HEK293 (cell line): ENCODE measurements at regions of chr13 and their contacts with region 1.

Region 1: DNA sequence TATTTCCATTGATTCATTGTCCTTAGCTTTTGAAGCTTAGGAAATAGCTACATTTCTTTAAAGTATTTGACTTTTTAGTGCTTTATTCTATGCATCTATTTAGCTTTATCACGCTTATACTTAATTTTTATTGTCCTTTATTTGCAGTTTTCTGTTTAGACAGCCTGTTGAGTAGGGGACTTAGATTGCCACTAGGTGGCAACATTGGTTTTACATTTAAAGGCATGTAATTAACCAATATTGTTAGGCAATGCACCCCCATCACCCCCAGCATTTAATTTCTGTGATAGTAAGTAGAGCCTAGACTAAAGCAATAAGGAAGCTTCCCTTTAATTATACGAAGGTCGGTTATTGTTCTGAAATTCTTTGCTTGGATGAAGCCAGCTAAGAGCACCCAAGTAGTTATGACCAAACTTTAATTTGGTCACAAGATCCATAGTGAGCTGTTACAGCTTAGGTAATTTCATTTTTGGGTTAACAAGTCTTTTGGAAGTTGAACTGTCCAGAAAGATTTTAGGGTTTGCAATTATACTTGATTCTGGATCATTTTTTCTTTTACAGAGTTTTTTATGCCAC is 36.5 kb downstream of the B3GLCT start:
- H3K4me3 ChIP-seq: no peak overlapping the region
- H3K27ac ChIP-seq: no peak overlapping the region
- H3K4me1 ChIP-seq: no peaks in the 10 kb centered on the region
- CTCF ChIP-seq: no peak

Region 2: DNA sequence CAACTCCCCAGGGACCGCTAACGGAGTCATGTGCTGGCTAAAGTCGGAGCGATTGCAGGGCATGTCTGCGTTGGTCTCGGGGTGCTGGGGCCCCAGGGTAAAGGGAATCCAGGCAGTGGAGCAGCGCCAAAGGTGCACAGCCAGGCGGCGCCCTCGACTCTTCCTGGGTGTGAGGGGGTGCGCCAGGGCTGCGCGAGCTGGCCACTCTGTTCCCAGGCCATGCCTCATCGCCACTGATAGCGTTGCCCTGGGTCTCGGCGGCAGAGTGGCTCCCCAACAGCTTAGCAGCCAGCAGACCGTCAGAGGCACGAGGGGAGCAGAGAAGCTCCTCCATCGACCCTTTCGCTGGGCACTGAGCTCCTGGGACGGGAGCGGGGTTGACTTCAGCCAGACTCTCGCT is 116.2 kb after region 1 on chr13:
- CTCF ChIA-PET with region 1: no interaction called
- POLR2A ChIA-PET with region 1: no interaction called
- H3K4me3 ChIP-seq: no peak overlapping the region
- H3K27ac ChIP-seq: no peak overlapping the region
- H3K4me1 ChIP-seq: no peaks in the 10 kb centered on the region
- CTCF ChIP-seq: no peak

Region 3: DNA sequence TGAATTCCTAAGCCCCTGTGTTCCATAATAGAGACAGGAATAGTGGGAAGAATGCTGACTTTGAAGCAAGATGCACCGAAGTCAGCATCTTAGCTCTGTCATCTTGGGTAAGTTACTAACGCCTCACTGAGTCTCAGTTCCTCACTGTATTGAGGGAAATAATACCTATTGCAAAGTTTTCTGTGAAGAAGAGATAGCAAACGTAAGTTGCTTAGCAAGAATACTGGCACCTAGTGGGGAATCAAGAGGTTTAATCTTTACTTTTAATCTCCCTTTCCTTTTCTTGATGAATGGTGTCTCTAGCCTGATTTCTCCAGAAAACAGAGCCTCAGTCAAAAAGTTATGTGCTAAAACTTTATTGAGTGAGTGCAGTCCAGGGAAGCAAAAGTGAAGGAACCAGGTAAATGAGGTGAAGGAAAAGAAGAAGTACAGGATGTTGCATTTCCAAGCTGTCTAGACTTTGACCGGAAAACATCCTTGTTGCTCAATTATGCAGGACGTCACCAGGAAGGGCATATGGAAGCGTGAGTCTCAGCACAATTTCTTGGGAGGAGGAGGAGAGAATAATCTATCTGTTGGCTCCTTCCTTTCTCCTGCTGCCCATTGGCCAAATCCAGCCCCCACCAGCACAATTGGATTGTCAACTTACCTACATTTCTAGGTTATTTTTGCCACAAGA is 173.5 kb after region 1 on chr13:
- CTCF ChIA-PET with region 1: interaction called, 13 read pairs
- POLR2A ChIA-PET with region 1: no interaction called
- H3K4me3 ChIP-seq: no peak overlapping the region
- H3K27ac ChIP-seq: no peak overlapping the region
- H3K4me1 ChIP-seq: no peaks in the 10 kb centered on the region; the same call in 1 of the 2 replicates
- CTCF ChIP-seq: no peak

Region 4: GRCh38 chr13:31424117-31424729 is 187.9 kb after region 1 on chr13:
- CTCF ChIA-PET with region 1: interaction called, 84 read pairs
- POLR2A ChIA-PET with region 1: no interaction called
- H3K4me3 ChIP-seq: no peak overlapping the region
- H3K27ac ChIP-seq: no peak overlapping the region
- H3K4me1 ChIP-seq: no peaks in the 10 kb centered on the region
- CTCF ChIP-seq: peak; percentile 57